Transverse colon (tissue), 4 donors: ENCODE measurements at regions of chr5 and their contacts with region 1.

Region 1: DNA sequence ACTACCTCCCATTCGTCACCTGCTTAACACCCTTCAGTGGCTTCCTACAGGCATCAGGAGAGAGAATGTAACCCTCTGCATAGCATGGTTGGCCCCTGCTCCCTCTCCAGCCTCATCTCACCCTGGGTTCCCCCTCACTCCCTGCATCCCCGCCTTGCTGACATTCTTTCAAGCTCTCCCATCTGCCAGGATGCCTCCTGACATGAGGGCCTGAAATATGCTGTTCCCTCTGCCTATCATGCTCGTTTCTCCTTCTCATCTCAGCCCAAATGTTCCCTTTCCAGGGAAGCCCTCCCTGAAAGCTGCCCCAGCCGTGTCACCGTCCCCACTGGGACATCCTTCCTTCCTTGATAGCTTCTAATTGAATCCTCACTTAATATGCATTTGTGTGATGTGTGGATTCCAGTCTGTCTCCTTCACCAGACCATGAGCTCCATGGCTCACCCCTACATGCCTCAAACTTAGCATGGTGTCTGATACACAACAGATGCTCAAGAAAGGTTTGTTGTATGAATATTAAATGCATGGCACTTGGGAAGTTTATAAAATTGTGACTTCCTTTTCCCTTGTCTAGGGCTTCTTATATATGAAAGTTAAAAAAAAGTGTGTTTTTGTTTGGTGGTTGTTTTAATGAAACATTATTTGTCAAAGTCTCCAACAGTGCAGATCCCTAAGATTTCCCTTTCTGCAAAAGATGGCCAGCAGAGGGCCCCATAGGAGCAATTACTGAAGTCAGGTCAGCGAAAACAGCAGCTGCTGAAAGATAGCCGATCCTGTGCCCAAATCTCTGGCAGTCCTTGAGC is 7.3 kb upstream of the C5orf58 start:
- DNase-seq: peak; percentile 65
- H3K4me3 ChIP-seq: no peak overlapping the region
- H3K27ac ChIP-seq: no peak overlapping the region
- H3K4me1 ChIP-seq: peaks cover 0 to 9% (median 4%) of the 10 kb centered on the region in 4 donors
- H3K27me3 ChIP-seq: no peaks in the 10 kb centered on the region
- CTCF ChIP-seq: peak; percentile 50 to 71 (median 65)
- EP300 ChIP-seq: no peak
- POLR2A ChIP-seq: no peak

Region 2: DNA sequence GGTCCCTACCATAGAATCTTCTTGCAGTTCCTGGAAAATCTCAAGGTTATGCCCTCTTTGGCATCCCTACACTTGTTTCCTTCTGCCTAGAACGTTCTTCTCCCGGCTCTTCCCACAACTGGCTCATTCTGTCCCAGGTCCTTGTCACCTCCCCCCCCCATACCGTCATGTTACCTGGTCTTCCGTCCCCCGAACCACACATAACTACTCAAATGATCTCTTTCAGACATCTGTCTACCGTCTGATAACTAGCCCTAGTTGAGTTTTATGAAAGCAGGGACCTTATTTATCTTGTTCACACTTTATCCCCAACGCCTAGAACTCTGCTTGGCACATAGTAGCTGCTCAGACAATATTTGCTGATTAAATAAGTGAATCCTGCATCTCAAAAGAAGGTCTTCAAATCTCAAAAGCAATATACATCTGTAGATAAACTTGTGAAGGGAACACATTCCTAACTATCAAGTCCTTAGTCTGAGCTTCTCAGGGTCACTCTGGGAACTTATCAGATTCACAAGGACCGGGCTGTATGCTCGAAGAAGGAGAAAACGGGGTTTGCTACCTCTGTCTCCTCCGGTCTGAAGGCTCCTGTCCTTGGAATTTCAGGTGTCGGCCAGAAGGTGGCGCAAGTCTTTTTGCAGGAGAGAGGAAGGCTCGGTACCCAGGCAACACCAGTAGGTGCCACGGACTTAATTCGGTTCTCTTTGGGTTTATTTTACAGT is 42.1 kb after region 1 on chr5:
- in situ Hi-C with region 1: loop called in 1 of 4 experiments (anchors 5 kb)
- intact Hi-C with region 1: no loop called
- DNase-seq: peak; percentile 77
- H3K4me3 ChIP-seq: no peak overlapping the region
- H3K27ac ChIP-seq: peak overlapping the region; percentile 31 to 64 (median 54)
- H3K4me1 ChIP-seq: peaks cover 5 to 32% (median 10%) of the 10 kb centered on the region in 4 donors
- H3K27me3 ChIP-seq: no peaks in the 10 kb centered on the region
- CTCF ChIP-seq: peak; percentile 73 to 85 (median 78)
- EP300 ChIP-seq: no peak
- POLR2A ChIP-seq: no peak

Region 3: GRCh38 chr5:170348137-170348633 is 122.7 kb after region 1 on chr5:
- in situ Hi-C with region 1: loop called in 1 of 4 experiments (anchors 10 kb)
- intact Hi-C with region 1: no loop called
- DNase-seq: no peak
- H3K4me3 ChIP-seq: no peak overlapping the region
- H3K27ac ChIP-seq: no peak overlapping the region
- H3K4me1 ChIP-seq: peaks cover 0 to 5% (median 2%) of the 10 kb centered on the region in 4 donors
- H3K27me3 ChIP-seq: no peaks in the 10 kb centered on the region
- CTCF ChIP-seq: no peak
- EP300 ChIP-seq: no peak
- POLR2A ChIP-seq: no peak

Region 4: GRCh38 chr5:170411100-170411499 is 185.6 kb after region 1 on chr5:
- in situ Hi-C with region 1: loop called in 1 of 4 experiments (anchors 10 kb)
- intact Hi-C with region 1: no loop called
- DNase-seq: no peak
- H3K4me3 ChIP-seq: no peak overlapping the region
- H3K27ac ChIP-seq: no peak overlapping the region
- H3K4me1 ChIP-seq: no peaks in the 10 kb centered on the region
- H3K27me3 ChIP-seq: no peaks in the 10 kb centered on the region
- CTCF ChIP-seq: no peak
- EP300 ChIP-seq: no peak
- POLR2A ChIP-seq: no peak

Region 5: DNA sequence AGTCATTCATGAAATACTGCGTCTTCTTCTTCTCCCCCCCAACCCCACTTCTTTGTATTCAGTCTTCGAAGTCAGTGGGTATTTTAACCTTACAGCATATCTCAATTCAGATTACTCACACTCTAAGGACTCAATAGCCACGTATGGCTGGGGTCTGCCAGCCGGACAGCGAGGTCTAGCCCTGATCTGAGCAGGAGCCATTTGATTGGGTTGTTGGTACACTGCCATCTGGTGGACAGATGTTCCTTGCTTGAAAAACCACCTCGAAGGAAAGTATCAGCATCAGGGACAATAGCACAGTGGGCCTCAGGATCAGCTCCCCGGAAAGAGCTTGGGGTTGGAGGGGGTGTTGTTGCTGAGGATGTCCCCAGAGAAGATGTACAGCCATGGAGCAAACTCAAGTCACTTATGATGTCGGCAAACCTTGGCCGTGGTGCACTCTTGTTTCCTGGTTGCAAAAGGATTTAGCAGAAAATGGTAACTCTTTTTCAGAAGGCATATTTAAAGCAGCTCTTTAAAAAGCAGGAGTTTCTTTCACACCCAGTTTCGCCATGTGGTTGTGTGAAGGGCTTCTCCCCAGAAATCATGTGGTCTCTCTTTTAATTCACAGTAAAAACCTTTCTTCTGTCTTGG is 195.4 kb after region 1 on chr5:
- in situ Hi-C with region 1: loop called in 1 of 4 experiments (anchors 10 kb)
- intact Hi-C with region 1: loop called (anchors 5 kb)
- DNase-seq: peak; percentile 38
- H3K4me3 ChIP-seq: no peak overlapping the region
- H3K27ac ChIP-seq: no peak overlapping the region
- H3K4me1 ChIP-seq: peaks cover 0 to 6% (median 0%) of the 10 kb centered on the region in 4 donors
- H3K27me3 ChIP-seq: no peaks in the 10 kb centered on the region
- CTCF ChIP-seq: peak; percentile 54 to 76 (median 68)
- EP300 ChIP-seq: no peak
- POLR2A ChIP-seq: no peak

Region 6: DNA sequence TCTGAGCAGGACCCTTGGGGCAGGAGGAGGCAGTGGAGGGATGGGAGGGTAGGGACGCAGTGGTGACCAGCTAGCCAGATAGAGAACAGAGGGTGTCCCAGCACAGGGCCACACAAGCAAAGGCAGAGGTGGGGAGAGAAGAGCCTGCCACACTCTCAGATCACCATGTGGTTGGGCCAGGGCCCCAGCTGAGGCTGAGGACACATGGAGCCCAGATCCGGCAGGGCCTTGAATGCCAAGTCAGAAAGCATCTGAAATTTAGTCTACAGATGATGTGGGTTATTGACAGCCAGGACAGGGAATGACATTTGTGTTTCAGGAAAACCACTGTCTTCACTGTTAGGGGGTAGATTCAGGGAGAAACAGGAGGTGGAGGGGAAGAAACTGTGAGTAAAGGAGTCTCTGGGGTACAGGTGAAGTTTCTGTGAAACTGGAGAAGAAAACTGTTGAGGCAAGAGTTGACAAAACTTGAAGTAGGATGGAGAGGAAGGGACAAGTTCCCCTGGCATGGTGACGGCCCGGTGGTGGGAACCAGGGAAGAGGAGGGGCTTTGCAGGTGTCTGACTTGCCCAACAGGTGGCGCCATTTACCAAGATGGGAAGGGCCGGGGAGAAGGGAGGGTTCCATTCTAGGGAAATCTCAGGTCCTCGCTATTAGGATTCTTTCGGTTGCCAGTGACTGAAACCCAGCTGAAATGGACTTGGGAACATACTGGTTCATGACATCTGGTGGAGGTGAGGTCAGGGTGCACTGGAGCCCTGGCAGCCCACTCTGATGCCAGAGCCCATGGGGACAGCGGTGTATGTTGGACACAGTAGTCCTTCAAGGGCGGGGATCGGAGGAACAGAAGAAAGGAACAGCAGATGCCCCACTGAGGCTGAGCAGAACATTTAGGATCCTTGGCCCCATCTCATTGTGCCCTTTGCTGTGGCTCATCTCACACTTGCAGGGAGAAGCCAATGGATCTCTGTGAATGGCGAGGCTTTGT is 378.3 kb after region 1 on chr5:
- in situ Hi-C with region 1: loop called in 1 of 4 experiments (anchors 25 kb)
- intact Hi-C with region 1: no loop called
- DNase-seq: peak; percentile 30
- H3K4me3 ChIP-seq: no peak overlapping the region
- H3K27ac ChIP-seq: no peak overlapping the region
- H3K4me1 ChIP-seq: no peaks in the 10 kb centered on the region
- H3K27me3 ChIP-seq: no peaks in the 10 kb centered on the region
- CTCF ChIP-seq: peak; percentile 38 to 66 (median 55)
- EP300 ChIP-seq: no peak
- POLR2A ChIP-seq: no peak

Region 7: GRCh38 chr5:171162602-171163001 is 937.1 kb after region 1 on chr5:
- in situ Hi-C with region 1: no loop called
- intact Hi-C with region 1: no loop called
- DNase-seq: no peak
- H3K4me3 ChIP-seq: no peak overlapping the region
- H3K27ac ChIP-seq: no peak overlapping the region
- H3K4me1 ChIP-seq: no peaks in the 10 kb centered on the region
- H3K27me3 ChIP-seq: no peaks in the 10 kb centered on the region
- CTCF ChIP-seq: peak in 1 of 5 experiments; percentile 3
- EP300 ChIP-seq: no peak
- POLR2A ChIP-seq: no peak